Activated T-helper 2 cell treated with anti-CD3 and anti-CD28 coated beads, Interferon-gamma antibody, Interleukin-2, Interleukin-4, amounts not matched to agents 10 μg/mL and 5 μg/mL and 100 μg/mL, durations not matched to agents 14 hours and 24 hours and 36 hours (primary cell): ENCODE measurements at regions of chr2 and their contacts with region 1.

Region 1: DNA sequence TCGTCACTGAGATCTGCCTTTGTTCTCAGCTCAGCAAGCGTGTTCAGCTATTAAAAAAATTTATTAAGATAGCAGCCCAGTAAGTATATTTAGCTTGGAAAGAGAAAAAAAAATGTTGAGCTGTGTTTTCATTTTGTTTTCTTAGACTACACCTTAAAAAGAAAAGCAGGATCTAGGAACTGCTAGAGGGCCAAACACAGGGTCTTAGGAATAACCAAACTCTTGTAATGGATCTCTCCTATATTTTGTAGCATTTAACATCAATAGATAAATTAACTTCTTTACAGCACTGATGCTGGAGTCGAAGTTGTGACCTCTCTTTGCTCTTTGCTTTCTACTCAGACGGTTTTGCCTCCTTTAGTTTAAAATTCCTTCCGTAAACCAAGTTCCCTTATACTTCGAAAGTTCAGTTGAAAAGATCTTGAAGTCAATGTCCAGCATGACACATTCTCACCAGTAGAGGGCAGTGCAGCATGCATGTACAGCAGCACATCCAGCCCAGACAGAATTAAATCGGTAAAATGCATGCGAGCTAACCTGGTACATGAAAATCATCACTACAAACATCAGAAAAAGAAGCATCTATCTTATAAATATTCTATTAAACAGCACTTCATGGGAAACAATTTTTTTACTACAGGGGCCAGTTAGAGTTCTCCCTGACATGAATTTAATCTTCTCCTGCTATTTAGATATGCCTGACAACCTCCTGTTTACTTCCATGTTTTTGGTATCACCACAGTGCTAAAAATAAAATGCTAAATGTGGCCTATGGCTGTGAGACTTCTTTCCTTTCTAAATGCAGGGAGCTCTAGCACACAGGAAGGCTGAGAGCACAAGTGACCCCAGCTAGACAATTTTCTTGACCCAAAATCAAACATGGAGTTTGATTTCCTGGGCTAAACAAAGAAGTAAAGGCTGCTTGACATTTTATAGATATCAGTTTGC is 48.2 kb upstream of the MAP3K20 start:
- DNase-seq: peak; percentile 60
- H3K4me3 Mint-ChIP-seq: no peak overlapping the region
- H3K27ac Mint-ChIP-seq: no peak overlapping the region
- H3K4me1 Mint-ChIP-seq: peaks cover 4% of the 10 kb centered on the region
- H3K27me3 Mint-ChIP-seq: peaks cover 17% of the 10 kb centered on the region

Region 2: DNA sequence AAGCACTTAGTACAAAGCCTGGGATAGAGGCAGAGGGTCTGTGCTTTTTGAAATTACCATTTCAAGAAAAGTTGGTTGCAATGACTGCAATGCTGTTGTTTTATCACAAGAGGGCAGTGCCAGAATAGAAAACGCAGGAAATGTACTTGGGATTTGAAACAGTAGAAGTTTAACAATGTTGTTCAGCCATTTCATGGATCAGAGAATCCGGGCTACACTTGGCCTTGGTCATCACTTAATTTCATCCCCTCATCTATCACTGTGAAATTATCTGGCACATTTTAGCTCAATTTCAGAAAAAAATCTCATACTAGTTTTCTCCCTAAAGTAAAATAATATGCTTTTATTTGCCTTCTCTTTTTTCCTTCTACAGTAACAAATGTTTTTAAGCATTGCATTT is 221.0 kb before region 1 on chr2:
- intact Hi-C with region 1: loop called (anchors 2 kb)
- DNase-seq: no peak
- H3K4me3 Mint-ChIP-seq: no peak overlapping the region
- H3K27ac Mint-ChIP-seq: no peak overlapping the region
- H3K4me1 Mint-ChIP-seq: peaks cover 1% of the 10 kb centered on the region
- H3K27me3 Mint-ChIP-seq: peaks cover 4% of the 10 kb centered on the region

Region 3: DNA sequence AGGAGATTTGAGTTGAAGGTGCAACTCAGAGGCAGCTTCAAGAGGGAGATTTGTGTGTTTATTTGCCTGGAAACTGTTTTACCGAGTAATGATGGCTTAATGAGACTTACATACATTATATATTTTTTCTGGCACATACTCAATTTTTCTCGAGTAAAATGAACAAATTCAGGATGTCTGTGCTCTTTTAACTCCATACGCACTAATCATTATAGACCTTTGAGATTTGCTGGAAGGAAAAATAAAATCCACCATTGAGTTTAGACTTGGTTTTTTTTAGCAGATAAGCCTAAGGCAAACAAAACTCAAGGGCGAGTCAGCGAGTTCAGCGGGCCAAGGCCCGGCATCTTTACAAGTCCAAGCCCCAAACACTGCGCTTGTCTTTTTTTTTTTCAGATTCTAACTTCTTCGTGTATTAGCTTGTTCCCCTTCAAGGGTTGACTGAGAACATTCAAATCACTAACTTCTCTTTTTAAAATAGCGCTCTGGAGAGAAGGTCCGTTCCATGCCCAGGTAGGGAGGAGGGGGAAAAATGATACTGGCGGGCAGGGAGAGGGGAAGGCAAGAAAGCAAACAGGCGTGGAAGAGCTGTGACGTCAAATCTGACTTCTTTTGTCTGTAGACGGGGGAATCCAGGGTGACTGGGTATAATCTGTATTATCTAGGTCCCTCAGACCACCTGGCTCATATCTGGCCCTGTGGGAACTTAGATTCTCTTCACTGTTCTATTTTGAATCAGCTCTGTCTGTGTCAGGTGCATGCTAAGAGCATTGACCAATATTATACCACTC is 24.5 kb before region 1 on chr2:
- intact Hi-C with region 1: no loop called
- DNase-seq: no peak
- H3K4me3 Mint-ChIP-seq: no peak overlapping the region
- H3K27ac Mint-ChIP-seq: no peak overlapping the region
- H3K4me1 Mint-ChIP-seq: no peaks in the 10 kb centered on the region
- H3K27me3 Mint-ChIP-seq: peaks cover 10% of the 10 kb centered on the region

Region 4: GRCh38 chr2:173059927-173060565 is 32.6 kb after region 1 on chr2:
- intact Hi-C with region 1: no loop called
- DNase-seq: no peak
- H3K4me3 Mint-ChIP-seq: no peak overlapping the region
- H3K27ac Mint-ChIP-seq: no peak overlapping the region
- H3K4me1 Mint-ChIP-seq: no peaks in the 10 kb centered on the region
- H3K27me3 Mint-ChIP-seq: peaks cover 43% of the 10 kb centered on the region

Region 5: DNA sequence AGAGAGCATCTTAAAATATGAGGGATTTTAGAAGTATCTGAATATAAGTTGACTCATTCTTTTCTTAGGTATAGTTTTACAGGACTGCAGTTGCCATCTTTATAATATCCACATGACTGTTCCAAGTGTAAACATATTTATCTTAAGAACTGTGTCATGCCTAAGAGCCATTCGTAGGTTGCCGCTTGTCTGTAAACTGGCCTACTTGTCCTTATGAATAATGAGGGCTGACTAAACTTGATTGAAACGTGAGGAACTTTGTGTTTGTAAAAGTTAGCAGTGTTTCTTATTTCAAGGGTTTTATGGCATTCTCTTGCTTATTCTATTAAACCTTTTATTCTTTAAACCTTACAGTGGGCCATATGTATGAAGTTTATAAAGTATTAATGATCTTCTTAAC is 147.8 kb after region 1 on chr2:
- intact Hi-C with region 1: no loop called
- DNase-seq: no peak
- H3K4me3 Mint-ChIP-seq: no peak overlapping the region
- H3K27ac Mint-ChIP-seq: no peak overlapping the region
- H3K4me1 Mint-ChIP-seq: no peaks in the 10 kb centered on the region
- H3K27me3 Mint-ChIP-seq: peaks cover 12% of the 10 kb centered on the region